HEK293 (cell line): ENCODE measurements at regions of chr3 and their contacts with region 1.

Region 1: GRCh38 chr3:158659454-158660237 is 12.8 kb downstream of the LXN start:
- H3K4me3 ChIP-seq: no peak overlapping the region
- H3K27ac ChIP-seq: no peak overlapping the region
- H3K4me1 ChIP-seq: no peaks in the 10 kb centered on the region
- CTCF ChIP-seq: no peak

Region 2: GRCh38 chr3:158727206-158728060 is 67.8 kb after region 1 on chr3:
- CTCF ChIA-PET with region 1: interaction called, 18 read pairs
- POLR2A ChIA-PET with region 1: no interaction called
- H3K4me3 ChIP-seq: no peak overlapping the region
- H3K27ac ChIP-seq: no peak overlapping the region
- H3K4me1 ChIP-seq: peaks cover 4% of the 10 kb centered on the region
- CTCF ChIP-seq: no peak; the same call in 1 of the 2 replicates